H1 (cell line): ENCODE measurements at regions of chr4 and their contacts with region 1.

Region 1: GRCh38 chr4:139540632-139541031 is 15.4 kb downstream of the SETD7 start:
- DNase-seq: no peak
- H3K4me3 ChIP-seq: no peak overlapping the region
- H3K27ac ChIP-seq: no peak overlapping the region
- H3K4me1 ChIP-seq: peaks cover 0 to 3% (median under 1%) of the 10 kb centered on the region in 4 experiments; a peak in 1 of 7 replicates
- H3K27me3 ChIP-seq: no peaks in the 10 kb centered on the region
- CTCF ChIP-seq: no peak
- EP300 ChIP-seq: no peak
- POLR2A ChIP-seq: no peak
- RAD21 ChIP-seq: no peak

Region 2: GRCh38 chr4:139453371-139454110 is 87.1 kb before region 1 on chr4:
- CTCF ChIA-PET with region 1: no interaction called
- POLR2A ChIA-PET with region 1: no interaction called
- DNase-seq: peak; percentile 88 to 97
- H3K4me3 ChIP-seq: peak overlapping the region; percentile 67 to 96 (median 84)
- H3K27ac ChIP-seq: peak overlapping the region; percentile 83
- H3K4me1 ChIP-seq: peaks cover 0 to 12% (median 3%) of the 10 kb centered on the region in 4 experiments; a peak in 5 of 7 replicates
- H3K27me3 ChIP-seq: no peaks in the 10 kb centered on the region
- CTCF ChIP-seq: no peak; a peak in 1 of 4 replicates
- EP300 ChIP-seq: no peak
- POLR2A ChIP-seq: peak in 1 of 2 experiments; percentile 69; a peak in 2 of 3 replicates
- RAD21 ChIP-seq: no peak

Region 3: DNA sequence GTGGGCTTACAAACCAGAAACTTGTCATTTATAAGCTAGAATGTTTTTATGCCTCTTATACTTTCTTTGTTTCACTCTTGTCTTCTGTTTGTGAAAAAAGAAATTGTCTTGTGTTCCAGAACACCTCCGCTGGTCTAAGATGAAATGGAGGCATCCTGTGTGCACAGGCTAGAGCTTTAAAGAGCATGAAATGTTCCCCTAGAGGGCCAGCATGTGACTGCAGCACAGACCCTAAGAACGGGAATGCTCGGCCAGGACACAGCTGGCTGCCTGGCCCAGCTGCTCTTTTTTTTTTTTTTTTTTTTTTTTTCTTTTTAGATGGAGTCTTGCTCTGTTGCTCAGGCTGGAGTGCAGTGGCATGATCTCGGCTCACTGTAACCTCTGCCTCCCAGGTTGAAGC is 18.2 kb before region 1 on chr4:
- CTCF ChIA-PET with region 1: interaction called, 40 read pairs
- POLR2A ChIA-PET with region 1: no interaction called
- DNase-seq: no peak
- H3K4me3 ChIP-seq: no peak overlapping the region
- H3K27ac ChIP-seq: no peak overlapping the region
- H3K4me1 ChIP-seq: no peaks in the 10 kb centered on the region
- H3K27me3 ChIP-seq: no peaks in the 10 kb centered on the region
- CTCF ChIP-seq: peak; percentile 11 to 37 (median 28); a peak in 3 of 4 replicates
- EP300 ChIP-seq: no peak
- POLR2A ChIP-seq: no peak
- RAD21 ChIP-seq: peak in 1 of 2 experiments; percentile 20; a peak in 1 of 4 replicates